H1 (cell line): ENCODE measurements at regions of chr3 and their contacts with region 1.

Region 1: GRCh38 chr3:13346481-13347389 is 73.4 kb downstream of the NUP210 start:
- DNase-seq: peak in 1 of 2 experiments; percentile 73
- H3K4me3 ChIP-seq: peak overlapping the region in 1 of 4 experiments; percentile 32; a peak in 4 of 8 replicates
- H3K27ac ChIP-seq: peak overlapping the region; percentile 79
- H3K4me1 ChIP-seq: peaks cover 25 to 53% (median 36%) of the 10 kb centered on the region in 4 experiments
- H3K27me3 ChIP-seq: no peaks in the 10 kb centered on the region
- CTCF ChIP-seq: peak in 2 of 3 experiments; percentile 30 to 48; a peak in 2 of 4 replicates
- EP300 ChIP-seq: 0 out of 3 replicates have a peak, but pooled peaks of 1 of the 2 experiments have one; percentile 26
- POLR2A ChIP-seq: peak in 1 of 2 experiments; percentile 35; a peak in 1 of 3 replicates
- RAD21 ChIP-seq: peak; percentile 25 to 40; a peak in 2 of 4 replicates

Region 2: DNA sequence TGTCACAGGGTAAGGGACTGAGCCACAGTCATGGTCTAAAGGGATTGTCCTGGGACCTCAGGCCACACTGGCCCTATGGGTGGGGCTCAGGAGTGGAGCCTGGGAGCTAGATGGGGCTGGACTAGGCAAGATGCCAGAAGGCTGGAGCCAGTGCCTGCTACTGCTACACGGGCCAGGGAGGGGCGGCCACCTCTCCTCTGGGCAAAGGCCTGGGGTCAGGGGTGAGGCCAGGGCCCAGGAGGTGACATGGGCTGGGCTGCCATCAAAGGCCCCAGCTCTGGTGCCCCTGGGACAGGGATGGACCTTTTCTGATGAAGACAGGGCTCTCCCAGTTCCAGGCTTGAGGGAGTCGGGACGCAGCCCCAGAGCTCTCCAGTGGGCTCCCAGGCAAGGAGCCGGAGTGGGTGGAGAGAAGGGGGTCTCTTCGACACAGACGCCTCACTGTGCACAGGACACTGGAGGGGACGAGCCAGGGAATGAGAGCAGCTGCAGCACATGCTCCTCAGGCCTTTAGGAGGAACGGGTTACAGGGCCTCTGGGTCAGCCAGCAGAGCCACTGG is 211.4 kb before region 1 on chr3:
- CTCF ChIA-PET with region 1: no interaction called
- POLR2A ChIA-PET with region 1: no interaction called
- DNase-seq: no peak
- H3K4me3 ChIP-seq: no peak overlapping the region
- H3K27ac ChIP-seq: no peak overlapping the region
- H3K4me1 ChIP-seq: peaks cover 0 to 6% (median 2%) of the 10 kb centered on the region in 4 experiments; a peak in 3 of 7 replicates
- H3K27me3 ChIP-seq: no peaks in the 10 kb centered on the region
- CTCF ChIP-seq: no peak
- EP300 ChIP-seq: no peak
- POLR2A ChIP-seq: no peak
- RAD21 ChIP-seq: no peak

Region 3: GRCh38 chr3:13229273-13229949 is 117.3 kb before region 1 on chr3:
- CTCF ChIA-PET with region 1: interaction called, 17 read pairs
- POLR2A ChIA-PET with region 1: no interaction called
- DNase-seq: peak in 1 of 2 experiments; percentile 59
- H3K4me3 ChIP-seq: no peak overlapping the region
- H3K27ac ChIP-seq: no peak overlapping the region
- H3K4me1 ChIP-seq: peaks cover 0 to 3% (median under 1%) of the 10 kb centered on the region in 4 experiments; a peak in 2 of 7 replicates
- H3K27me3 ChIP-seq: no peaks in the 10 kb centered on the region
- CTCF ChIP-seq: peak in 2 of 3 experiments; percentile 78 to 92; a peak in 3 of 4 replicates
- EP300 ChIP-seq: peak in 1 of 2 experiments; percentile 33; a peak in 1 of 3 replicates
- POLR2A ChIP-seq: no peak
- RAD21 ChIP-seq: peak; percentile 65 to 81

Region 4: GRCh38 chr3:13308380-13308801 is 38.3 kb before region 1 on chr3:
- CTCF ChIA-PET with region 1: interaction called, 12 read pairs
- POLR2A ChIA-PET with region 1: no interaction called
- DNase-seq: peak; percentile 50 to 84
- H3K4me3 ChIP-seq: no peak overlapping the region
- H3K27ac ChIP-seq: no peak overlapping the region
- H3K4me1 ChIP-seq: peaks cover 0 to 5% (median 3%) of the 10 kb centered on the region in 4 experiments; a peak in 2 of 7 replicates
- H3K27me3 ChIP-seq: no peaks in the 10 kb centered on the region
- CTCF ChIP-seq: peak; percentile 69 to 92 (median 74)
- EP300 ChIP-seq: no peak
- POLR2A ChIP-seq: no peak
- RAD21 ChIP-seq: peak; percentile 54 to 67

Region 5: GRCh38 chr3:13332158-13332557 is 14.6 kb before region 1 on chr3:
- CTCF ChIA-PET with region 1: interaction called, 25 read pairs
- POLR2A ChIA-PET with region 1: interaction called, 5 read pairs
- DNase-seq: no peak
- H3K4me3 ChIP-seq: no peak overlapping the region
- H3K27ac ChIP-seq: no peak overlapping the region
- H3K4me1 ChIP-seq: no peaks in the 10 kb centered on the region
- H3K27me3 ChIP-seq: no peaks in the 10 kb centered on the region
- CTCF ChIP-seq: no peak
- EP300 ChIP-seq: no peak
- POLR2A ChIP-seq: no peak
- RAD21 ChIP-seq: no peak

Region 6: GRCh38 chr3:13401139-13401538 is 54.4 kb after region 1 on chr3:
- CTCF ChIA-PET with region 1: interaction called, 11 read pairs
- POLR2A ChIA-PET with region 1: no interaction called
- DNase-seq: no peak
- H3K4me3 ChIP-seq: no peak overlapping the region
- H3K27ac ChIP-seq: no peak overlapping the region
- H3K4me1 ChIP-seq: peaks cover 0 to 3% (median 0%) of the 10 kb centered on the region in 4 experiments; a peak in 1 of 7 replicates
- H3K27me3 ChIP-seq: no peaks in the 10 kb centered on the region
- CTCF ChIP-seq: no peak
- EP300 ChIP-seq: no peak
- POLR2A ChIP-seq: no peak
- RAD21 ChIP-seq: no peak

Region 7: GRCh38 chr3:13452490-13453335 is 106.0 kb after region 1 on chr3:
- CTCF ChIA-PET with region 1: interaction called, 53 read pairs
- POLR2A ChIA-PET with region 1: interaction called, 4 read pairs
- DNase-seq: no peak
- H3K4me3 ChIP-seq: peak overlapping the region in 1 of 4 experiments; percentile 57; a peak in 2 of 8 replicates
- H3K27ac ChIP-seq: no peak overlapping the region
- H3K4me1 ChIP-seq: peaks cover 2 to 5% (median 4%) of the 10 kb centered on the region in 4 experiments; a peak in 5 of 7 replicates
- H3K27me3 ChIP-seq: no peaks in the 10 kb centered on the region
- CTCF ChIP-seq: peak in 2 of 3 experiments; percentile 43 to 48; a peak in 2 of 4 replicates
- EP300 ChIP-seq: no peak
- POLR2A ChIP-seq: no peak
- RAD21 ChIP-seq: peak; percentile 65 to 68